ENCODE measurements at regions of chr2 and their contacts with region 1.

Region 1: DNA sequence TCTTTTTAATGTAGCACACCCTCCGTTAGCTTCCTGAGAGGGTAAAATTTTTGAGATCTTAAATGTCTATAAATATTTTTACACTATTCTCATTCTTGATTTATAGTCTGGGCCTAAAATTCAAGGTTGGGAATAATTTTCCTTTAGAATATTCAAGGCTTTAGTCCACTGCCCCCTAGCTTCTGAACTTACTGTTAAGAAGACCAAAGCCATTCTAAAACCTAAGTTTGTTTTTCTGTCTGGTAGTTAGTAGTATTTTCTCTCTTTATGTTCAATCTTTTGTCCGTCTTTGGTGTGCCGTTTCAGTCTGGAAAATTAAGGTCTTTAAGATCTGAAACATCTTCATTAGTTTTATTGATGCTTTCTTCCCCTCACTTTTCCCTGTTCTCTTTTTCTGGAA is 14.5 kb downstream of the OSBPL6 start:
- DNase-seq: no peak
- ATAC-seq: no peak
- H3K4me3 ChIP-seq: no peak overlapping the region
- H3K27ac ChIP-seq: no peak overlapping the region
- H3K4me1 ChIP-seq: no peaks in the 10 kb centered on the region
- H3K27me3 ChIP-seq: no peaks in the 10 kb centered on the region

Region 2: GRCh38 chr2:178256382-178257042 is 47.7 kb after region 1 on chr2:
- intact Hi-C with region 1: loop called in 1 of 4 experiments (anchors 10 kb)
- DNase-seq: no peak
- ATAC-seq: no peak
- H3K4me3 ChIP-seq: no peak overlapping the region
- H3K27ac ChIP-seq: no peak overlapping the region
- H3K4me1 ChIP-seq: no peaks in the 10 kb centered on the region
- H3K27me3 ChIP-seq: no peaks in the 10 kb centered on the region

Measured in right cardiac atrium (tissue), 5 donors.